Panc1 (cell line): ENCODE measurements at regions of chr12 and their contacts with region 1.

Region 1: GRCh38 chr12:45990468-45991283 is at the start of gene SCAF11:
- DNase-seq: peak; percentile 100
- ATAC-seq: peak; percentile 89
- H3K4me3 ChIP-seq: peak within 1 kb of the TSS; percentile 75 to 88
- H3K27ac ChIP-seq: peak within 1 kb of the TSS; percentile 98
- H3K4me1 ChIP-seq: peaks cover 25% of the 10 kb centered on the region
- H3K27me3 ChIP-seq: no peaks in the 10 kb centered on the region
- CTCF ChIP-seq: peak; percentile 97
- total RNA-seq, gene SCAF11: 98.3 TPM

Region 2: DNA sequence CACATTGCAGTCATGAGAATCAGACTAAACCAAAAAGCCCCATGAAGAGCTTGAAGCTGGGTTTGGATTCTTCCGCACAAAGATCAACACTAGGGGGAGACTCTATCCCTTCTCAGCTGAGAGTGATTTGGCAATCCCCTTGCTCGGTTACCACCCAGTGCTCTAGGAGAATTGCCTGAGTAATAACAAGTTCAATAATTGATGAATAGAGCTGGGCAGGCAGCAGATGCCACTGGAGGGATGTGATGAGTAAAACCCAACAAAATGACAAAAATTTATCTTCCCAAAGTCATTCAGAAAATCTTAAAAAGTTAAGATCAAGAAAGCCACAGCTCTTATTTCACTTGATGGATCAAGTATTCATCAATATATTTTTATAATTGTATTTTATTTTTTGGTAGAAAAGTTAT is 446.8 kb before region 1 on chr12:
- CTCF ChIA-PET with region 1: interaction called, 16 read pairs
- POLR2A ChIA-PET with region 1: no interaction called
- in situ Hi-C with region 1: no loop called
- intact Hi-C with region 1: no loop called
- DNase-seq: peak; percentile 73
- ATAC-seq: peak; percentile 93
- H3K4me3 ChIP-seq: no peak overlapping the region
- H3K27ac ChIP-seq: no peak overlapping the region
- H3K4me1 ChIP-seq: no peaks in the 10 kb centered on the region
- H3K27me3 ChIP-seq: no peaks in the 10 kb centered on the region; the same call in 1 of the 2 replicates
- CTCF ChIP-seq: peak; percentile 86

Region 3: DNA sequence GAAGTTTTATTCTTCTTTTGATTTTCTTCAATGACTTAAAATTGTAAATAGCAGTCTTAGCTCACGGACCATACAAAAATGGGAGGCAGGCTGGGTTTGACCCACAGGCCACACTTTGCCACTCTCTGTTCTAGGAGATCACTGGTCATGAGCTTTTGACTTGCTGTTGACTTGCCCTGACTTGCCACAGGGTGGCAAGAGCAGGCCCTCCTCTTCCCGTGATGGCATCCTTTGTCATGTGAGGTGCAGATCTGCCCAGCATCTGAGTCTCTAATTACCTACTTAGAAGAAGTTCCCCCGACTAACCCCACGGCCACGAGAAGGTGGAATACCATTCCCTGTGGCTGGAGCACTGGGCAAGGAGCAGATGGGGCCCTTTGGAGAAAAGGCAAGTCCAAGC is 80.7 kb after region 1 on chr12:
- CTCF ChIA-PET with region 1: no interaction called
- POLR2A ChIA-PET with region 1: interaction called, 14 read pairs
- in situ Hi-C with region 1: no loop called
- intact Hi-C with region 1: no loop called
- DNase-seq: no peak
- ATAC-seq: no peak; the same call in 1 of the 2 replicates
- H3K4me3 ChIP-seq: no peak overlapping the region
- H3K27ac ChIP-seq: no peak overlapping the region
- H3K4me1 ChIP-seq: peaks cover 4% of the 10 kb centered on the region; the same call in 1 of the 2 replicates
- H3K27me3 ChIP-seq: peaks cover 5% of the 10 kb centered on the region; the same call in 1 of the 2 replicates
- CTCF ChIP-seq: no peak

Region 4: DNA sequence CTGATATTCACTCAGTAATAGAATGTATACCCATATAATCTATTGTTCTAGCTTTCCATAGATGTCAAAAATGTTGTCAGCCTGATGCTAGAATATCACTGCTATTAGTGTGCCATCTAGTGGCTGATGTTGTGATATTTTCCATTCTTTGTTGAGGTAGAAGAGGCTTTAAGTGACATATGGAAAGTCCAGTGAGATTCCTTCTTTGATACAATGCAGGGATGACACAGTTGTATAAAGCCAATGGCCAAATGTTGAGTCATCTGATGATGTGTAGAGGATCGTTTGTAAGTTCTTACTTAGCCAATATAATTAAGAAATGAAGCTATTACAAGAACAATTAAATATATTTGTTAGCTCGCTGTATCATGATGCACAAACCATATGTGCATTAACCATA is 1030.6 kb after region 1 on chr12:
- CTCF ChIA-PET with region 1: no interaction called
- POLR2A ChIA-PET with region 1: no interaction called
- in situ Hi-C with region 1: no loop called
- intact Hi-C with region 1: loop called (anchors 5 kb)
- DNase-seq: peak; percentile 84
- ATAC-seq: peak; percentile 75
- H3K4me3 ChIP-seq: no peak overlapping the region
- H3K27ac ChIP-seq: no peak overlapping the region
- H3K4me1 ChIP-seq: no peaks in the 10 kb centered on the region
- H3K27me3 ChIP-seq: no peaks in the 10 kb centered on the region
- CTCF ChIP-seq: peak; percentile 68; the same call in 1 of the 2 replicates